ENCODE measurements at regions of chr22 and their contacts with region 1.

Region 1: GRCh38 chr22:22463855-22464540 is 44.5 kb downstream of the ZNF280B start:
- DNase-seq: peak; percentile 62
- ATAC-seq: peak; percentile 78
- H3K4me3 ChIP-seq: no peak overlapping the region
- H3K27ac ChIP-seq: no peak overlapping the region
- H3K4me1 ChIP-seq: no peaks in the 10 kb centered on the region
- H3K27me3 ChIP-seq: peaks cover 0 to 6% of the 10 kb centered on the region in 2 experiments; a peak in 1 of 5 replicates
- CTCF ChIP-seq: peak; percentile 84
- EP300 ChIP-seq: no peak
- POLR2A ChIP-seq: no peak
- RAD21 ChIP-seq: peak; percentile 73; the same call in 1 of the 2 replicates

Region 2: DNA sequence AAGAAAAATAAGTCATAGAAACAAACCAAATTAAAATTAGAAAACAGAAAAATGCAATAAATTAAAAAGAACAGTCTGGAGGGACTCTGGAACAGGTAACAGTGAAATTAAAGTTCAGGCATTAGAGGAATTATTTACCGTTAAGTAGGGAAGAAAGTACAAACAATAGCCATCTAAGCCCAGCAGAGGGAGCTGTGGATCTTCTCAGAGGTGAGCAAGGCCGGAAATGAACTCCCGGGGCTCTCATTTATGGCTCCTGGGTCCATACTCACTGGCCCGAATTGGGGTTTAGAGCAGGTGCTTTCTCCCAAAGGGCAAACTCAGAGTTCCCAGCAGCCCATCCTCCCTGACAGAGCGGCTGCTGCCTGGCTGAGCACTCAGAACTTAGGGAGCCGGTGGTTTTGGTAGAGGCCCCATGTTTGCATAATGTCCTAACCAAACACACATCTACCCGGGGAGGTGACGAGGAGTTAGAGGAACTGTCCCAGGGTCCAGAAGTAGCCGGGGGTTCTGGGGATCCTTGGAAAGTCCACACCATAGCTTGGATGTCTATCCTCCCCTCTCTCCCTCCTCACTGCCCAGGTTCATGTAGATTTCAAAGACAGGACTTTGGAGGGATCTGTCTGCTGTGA is 307.2 kb before region 1 on chr22:
- CTCF ChIA-PET with region 1: no interaction called
- POLR2A ChIA-PET with region 1: no interaction called
- in situ Hi-C with region 1: no loop called
- intact Hi-C with region 1: no loop called
- DNase-seq: peak; percentile 70
- ATAC-seq: peak; percentile 80
- H3K4me3 ChIP-seq: peak overlapping the region; percentile 43 to 65 (median 55); a peak in 5 of 6 replicates
- H3K27ac ChIP-seq: no peak overlapping the region
- H3K4me1 ChIP-seq: peaks cover 8% of the 10 kb centered on the region
- H3K27me3 ChIP-seq: peaks cover 0 to 8% of the 10 kb centered on the region in 2 experiments; a peak in 1 of 5 replicates
- CTCF ChIP-seq: peak; percentile 80
- EP300 ChIP-seq: no peak
- POLR2A ChIP-seq: no peak
- RAD21 ChIP-seq: peak; percentile 39; the same call in 1 of the 2 replicates

Region 3: GRCh38 chr22:22538226-22538989 is 74.4 kb after region 1 on chr22:
- CTCF ChIA-PET with region 1: no interaction called
- POLR2A ChIA-PET with region 1: no interaction called
- in situ Hi-C with region 1: no loop called
- intact Hi-C with region 1: no loop called
- DNase-seq: no peak
- ATAC-seq: no peak
- H3K4me3 ChIP-seq: no peak overlapping the region
- H3K27ac ChIP-seq: no peak overlapping the region
- H3K4me1 ChIP-seq: no peaks in the 10 kb centered on the region
- H3K27me3 ChIP-seq: peaks cover 0 to 3% of the 10 kb centered on the region in 2 experiments; a peak in 1 of 5 replicates
- CTCF ChIP-seq: no peak
- EP300 ChIP-seq: no peak
- POLR2A ChIP-seq: no peak
- RAD21 ChIP-seq: no peak

Region 4: DNA sequence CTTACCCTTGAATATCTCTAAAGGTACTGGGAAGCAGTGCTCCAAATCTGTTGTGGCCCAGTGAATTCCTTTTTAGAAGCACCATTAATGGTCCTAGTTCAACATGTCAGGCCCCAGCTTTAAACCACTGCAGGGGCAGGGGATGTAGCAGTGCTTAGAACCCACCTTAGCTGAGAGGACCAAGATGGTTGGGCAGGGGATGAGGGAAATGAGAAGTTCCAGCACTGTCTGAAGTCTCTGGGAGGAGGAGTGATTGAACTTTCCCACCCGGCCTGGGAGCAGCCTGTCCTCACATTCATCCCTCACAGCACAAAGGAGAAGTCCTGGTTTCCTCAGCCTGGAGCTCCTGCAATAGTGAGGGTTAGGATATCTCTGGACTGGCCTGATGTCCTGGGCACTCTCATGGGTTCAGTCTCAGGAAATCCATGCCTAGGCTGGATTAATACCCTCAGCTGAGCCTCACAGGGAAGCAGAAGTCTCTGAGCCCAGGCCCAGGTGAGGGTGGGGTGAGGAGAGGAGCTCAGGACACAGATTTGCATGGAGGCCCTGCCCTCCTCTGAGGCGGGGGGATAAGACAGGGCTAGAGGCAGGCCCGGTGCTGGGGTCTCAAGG is 123.7 kb after region 1 on chr22:
- CTCF ChIA-PET with region 1: interaction called, 7 read pairs
- POLR2A ChIA-PET with region 1: no interaction called
- in situ Hi-C with region 1: no loop called
- intact Hi-C with region 1: loop called (anchors 10 kb)
- DNase-seq: no peak
- ATAC-seq: no peak
- H3K4me3 ChIP-seq: no peak overlapping the region
- H3K27ac ChIP-seq: no peak overlapping the region
- H3K4me1 ChIP-seq: no peaks in the 10 kb centered on the region
- H3K27me3 ChIP-seq: peaks cover 2 to 11% of the 10 kb centered on the region in 2 experiments; a peak in 1 of 5 replicates
- CTCF ChIP-seq: no peak
- EP300 ChIP-seq: no peak
- POLR2A ChIP-seq: no peak
- RAD21 ChIP-seq: no peak

Measured in HepG2 (cell line).